ENCODE measurements at regions of chr3 and their contacts with region 1.

Region 1: GRCh38 chr3:149566292-149566975 is 91.4 kb downstream of the WWTR1 start:
- DNase-seq: no peak
- H3K4me3 ChIP-seq: no peak overlapping the region
- H3K27ac ChIP-seq: no peak overlapping the region
- H3K4me1 ChIP-seq: peaks cover 0 to 6% (median 3%) of the 10 kb centered on the region in 4 experiments; a peak in 4 of 7 replicates
- H3K27me3 ChIP-seq: no peaks in the 10 kb centered on the region
- CTCF ChIP-seq: no peak
- EP300 ChIP-seq: no peak
- POLR2A ChIP-seq: no peak
- RAD21 ChIP-seq: no peak

Region 2: GRCh38 chr3:149553781-149554451 is 12.5 kb before region 1 on chr3:
- CTCF ChIA-PET with region 1: interaction called, 11 read pairs
- POLR2A ChIA-PET with region 1: interaction called, 3 read pairs
- DNase-seq: no peak
- H3K4me3 ChIP-seq: no peak overlapping the region
- H3K27ac ChIP-seq: no peak overlapping the region
- H3K4me1 ChIP-seq: peaks cover 0 to 5% (median 1%) of the 10 kb centered on the region in 4 experiments; a peak in 5 of 7 replicates
- H3K27me3 ChIP-seq: no peaks in the 10 kb centered on the region
- CTCF ChIP-seq: no peak
- EP300 ChIP-seq: no peak
- POLR2A ChIP-seq: no peak
- RAD21 ChIP-seq: no peak

Region 3: DNA sequence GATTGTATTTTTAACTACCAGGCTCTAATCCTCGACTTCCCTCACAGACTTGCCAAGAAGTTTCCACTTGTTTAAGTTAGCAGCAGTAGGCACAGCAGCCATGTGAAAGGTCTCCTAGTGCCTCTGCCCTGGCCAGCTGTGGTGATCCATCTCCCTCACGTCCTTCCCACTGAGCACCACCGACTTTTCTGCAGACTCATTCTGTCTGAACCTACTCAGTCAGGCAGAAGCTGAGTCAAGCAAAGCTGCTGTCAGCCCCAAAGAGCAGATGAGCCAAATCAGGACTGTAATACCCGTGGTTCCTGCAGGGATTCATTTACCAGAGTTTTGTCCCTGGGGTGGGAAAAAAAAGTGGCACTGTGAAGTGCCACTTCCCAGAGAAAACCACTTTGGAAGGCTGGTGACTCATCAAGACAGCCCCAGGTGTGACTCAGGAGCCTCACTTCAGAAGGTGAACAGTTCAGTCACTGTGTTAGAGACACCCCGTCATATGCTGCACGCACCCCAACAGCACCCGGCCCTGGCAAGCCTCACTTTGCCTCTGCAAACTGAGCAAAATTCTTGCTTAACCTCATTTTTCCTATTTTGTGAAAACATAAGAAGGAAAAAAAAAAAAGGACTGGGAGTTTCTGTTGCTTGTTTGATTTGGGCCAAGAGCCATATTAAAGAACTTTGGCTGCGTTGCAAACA is 15.4 kb after region 1 on chr3:
- CTCF ChIA-PET with region 1: interaction called, 37 read pairs
- POLR2A ChIA-PET with region 1: interaction called, 3 read pairs
- DNase-seq: no peak
- H3K4me3 ChIP-seq: no peak overlapping the region
- H3K27ac ChIP-seq: no peak overlapping the region
- H3K4me1 ChIP-seq: peaks cover 2 to 9% (median 5%) of the 10 kb centered on the region in 4 experiments; a peak in 6 of 7 replicates
- H3K27me3 ChIP-seq: no peaks in the 10 kb centered on the region
- CTCF ChIP-seq: no peak
- EP300 ChIP-seq: no peak
- POLR2A ChIP-seq: no peak
- RAD21 ChIP-seq: no peak

Region 4: GRCh38 chr3:149596136-149596770 is 29.8 kb after region 1 on chr3:
- CTCF ChIA-PET with region 1: interaction called, 16 read pairs
- POLR2A ChIA-PET with region 1: no interaction called
- DNase-seq: no peak
- H3K4me3 ChIP-seq: no peak overlapping the region
- H3K27ac ChIP-seq: no peak overlapping the region
- H3K4me1 ChIP-seq: peaks cover 0 to 3% (median 1%) of the 10 kb centered on the region in 4 experiments; a peak in 2 of 7 replicates
- H3K27me3 ChIP-seq: no peaks in the 10 kb centered on the region
- CTCF ChIP-seq: no peak
- EP300 ChIP-seq: no peak
- POLR2A ChIP-seq: no peak
- RAD21 ChIP-seq: no peak

Region 5: GRCh38 chr3:149638228-149639092 is 72.0 kb after region 1 on chr3:
- CTCF ChIA-PET with region 1: interaction called, 13 read pairs
- POLR2A ChIA-PET with region 1: no interaction called
- DNase-seq: no peak
- H3K4me3 ChIP-seq: no peak overlapping the region
- H3K27ac ChIP-seq: no peak overlapping the region
- H3K4me1 ChIP-seq: peaks cover 0 to 6% (median 0%) of the 10 kb centered on the region in 4 experiments; a peak in 3 of 7 replicates
- H3K27me3 ChIP-seq: no peaks in the 10 kb centered on the region
- CTCF ChIP-seq: no peak
- EP300 ChIP-seq: no peak
- POLR2A ChIP-seq: no peak
- RAD21 ChIP-seq: no peak